ENCODE measurements at regions of chr6 and their contacts with region 1.

Region 1: GRCh38 chr6:26421259-26422144 is 18.8 kb upstream of the BTN3A3 start:
- DNase-seq: peak; percentile 72
- H3K4me3 Mint-ChIP-seq: no peak overlapping the region
- H3K27ac Mint-ChIP-seq: no peak overlapping the region
- H3K4me1 Mint-ChIP-seq: peaks cover 8% of the 10 kb centered on the region
- H3K27me3 Mint-ChIP-seq: no peaks in the 10 kb centered on the region
- CTCF ChIP-seq: no peak

Region 2: GRCh38 chr6:26383624-26384417 is 37.7 kb before region 1 on chr6:
- CTCF ChIA-PET with region 1: no interaction called
- intact Hi-C with region 1: loop called (anchors 1 kb)
- DNase-seq: peak; percentile 30
- H3K4me3 Mint-ChIP-seq: peak overlapping the region; percentile 95
- H3K27ac Mint-ChIP-seq: peak overlapping the region; percentile 88
- H3K4me1 Mint-ChIP-seq: peaks cover 35% of the 10 kb centered on the region
- H3K27me3 Mint-ChIP-seq: no peaks in the 10 kb centered on the region
- CTCF ChIP-seq: no peak

Region 3: GRCh38 chr6:26468829-26469228 is 47.3 kb after region 1 on chr6:
- CTCF ChIA-PET with region 1: no interaction called
- intact Hi-C with region 1: loop called (anchors 2 kb)
- DNase-seq: no peak
- H3K4me3 Mint-ChIP-seq: no peak overlapping the region
- H3K27ac Mint-ChIP-seq: no peak overlapping the region
- H3K4me1 Mint-ChIP-seq: no peaks in the 10 kb centered on the region
- H3K27me3 Mint-ChIP-seq: no peaks in the 10 kb centered on the region
- CTCF ChIP-seq: no peak

Region 4: GRCh38 chr6:26507658-26508057 is 86.2 kb after region 1 on chr6:
- CTCF ChIA-PET with region 1: no interaction called
- intact Hi-C with region 1: no loop called
- DNase-seq: no peak
- H3K4me3 Mint-ChIP-seq: no peak overlapping the region
- H3K27ac Mint-ChIP-seq: no peak overlapping the region
- H3K4me1 Mint-ChIP-seq: no peaks in the 10 kb centered on the region
- H3K27me3 Mint-ChIP-seq: peaks cover 55% of the 10 kb centered on the region
- CTCF ChIP-seq: no peak

Measured in Calu3 (cell line).